CD4-positive, alpha-beta T cell (primary cell): ENCODE measurements at regions of chr1 and their contacts with region 1.

Region 1: GRCh38 chr1:167676205-167676915 is 45.4 kb upstream of the MPZL1 start:
- DNase-seq: peak in 1 of 14 experiments; percentile 20
- ATAC-seq: no peak
- H3K4me3 ChIP-seq: no peak overlapping the region
- H3K4me3 Mint-ChIP-seq: no peak overlapping the region
- H3K27ac ChIP-seq: peak overlapping the region in 1 of 2 donors; percentile 5
- H3K27ac Mint-ChIP-seq: no peak overlapping the region
- H3K4me1 ChIP-seq: peaks cover 56% of the 10 kb centered on the region
- H3K4me1 Mint-ChIP-seq: peaks cover 34% of the 10 kb centered on the region
- H3K27me3 ChIP-seq: no peaks in the 10 kb centered on the region
- H3K27me3 Mint-ChIP-seq: no peaks in the 10 kb centered on the region
- CTCF ChIP-seq: no peak

Region 2: GRCh38 chr1:167043752-167044488 is 632.4 kb before region 1 on chr1:
- CTCF ChIA-PET with region 1: no interaction called
- POLR2A ChIA-PET with region 1: no interaction called
- intact Hi-C with region 1: no loop called
- DNase-seq: peak; percentile 38 to 87 (median 63)
- ATAC-seq: peak; percentile 99
- H3K4me3 ChIP-seq: peak overlapping the region; percentile 56
- H3K4me3 Mint-ChIP-seq: peak overlapping the region; percentile 90
- H3K27ac ChIP-seq: no peak overlapping the region
- H3K27ac Mint-ChIP-seq: peak overlapping the region; percentile 69
- H3K4me1 ChIP-seq: peaks cover 12% of the 10 kb centered on the region
- H3K4me1 Mint-ChIP-seq: peaks cover 14% of the 10 kb centered on the region
- H3K27me3 ChIP-seq: peaks cover 0 to 5% of the 10 kb centered on the region in 2 experiments
- H3K27me3 Mint-ChIP-seq: peaks cover 9% of the 10 kb centered on the region
- CTCF ChIP-seq: no peak

Region 3: GRCh38 chr1:167474191-167474716 is 202.1 kb before region 1 on chr1:
- CTCF ChIA-PET with region 1: no interaction called
- POLR2A ChIA-PET with region 1: no interaction called
- intact Hi-C with region 1: no loop called
- DNase-seq: peak in 8 of 14 experiments; percentile 40 to 80 (median 58)
- ATAC-seq: peak; percentile 84
- H3K4me3 ChIP-seq: peak overlapping the region; percentile 36
- H3K4me3 Mint-ChIP-seq: peak overlapping the region; percentile 78
- H3K27ac ChIP-seq: peak overlapping the region; percentile 67
- H3K27ac Mint-ChIP-seq: peak overlapping the region; percentile 100
- H3K4me1 ChIP-seq: peaks cover 74% of the 10 kb centered on the region
- H3K4me1 Mint-ChIP-seq: peaks cover 100% of the 10 kb centered on the region
- H3K27me3 ChIP-seq: no peaks in the 10 kb centered on the region
- H3K27me3 Mint-ChIP-seq: no peaks in the 10 kb centered on the region
- CTCF ChIP-seq: no peak

Region 4: GRCh38 chr1:167641786-167642500 is 34.4 kb before region 1 on chr1:
- CTCF ChIA-PET with region 1: interaction called, 5 read pairs
- POLR2A ChIA-PET with region 1: interaction called, 5 read pairs
- intact Hi-C with region 1: loop called in 1 of 2 experiments (anchors 5 kb)
- DNase-seq: peak in 4 of 14 experiments; percentile 33 to 66 (median 54)
- ATAC-seq: peak; percentile 27
- H3K4me3 ChIP-seq: no peak overlapping the region
- H3K4me3 Mint-ChIP-seq: peak overlapping the region; percentile 1
- H3K27ac ChIP-seq: peak overlapping the region in 1 of 2 donors; percentile 50
- H3K27ac Mint-ChIP-seq: peak overlapping the region; percentile 77
- H3K4me1 ChIP-seq: peaks cover 98% of the 10 kb centered on the region
- H3K4me1 Mint-ChIP-seq: peaks cover 90% of the 10 kb centered on the region
- H3K27me3 ChIP-seq: no peaks in the 10 kb centered on the region
- H3K27me3 Mint-ChIP-seq: no peaks in the 10 kb centered on the region
- CTCF ChIP-seq: no peak

Region 5: DNA sequence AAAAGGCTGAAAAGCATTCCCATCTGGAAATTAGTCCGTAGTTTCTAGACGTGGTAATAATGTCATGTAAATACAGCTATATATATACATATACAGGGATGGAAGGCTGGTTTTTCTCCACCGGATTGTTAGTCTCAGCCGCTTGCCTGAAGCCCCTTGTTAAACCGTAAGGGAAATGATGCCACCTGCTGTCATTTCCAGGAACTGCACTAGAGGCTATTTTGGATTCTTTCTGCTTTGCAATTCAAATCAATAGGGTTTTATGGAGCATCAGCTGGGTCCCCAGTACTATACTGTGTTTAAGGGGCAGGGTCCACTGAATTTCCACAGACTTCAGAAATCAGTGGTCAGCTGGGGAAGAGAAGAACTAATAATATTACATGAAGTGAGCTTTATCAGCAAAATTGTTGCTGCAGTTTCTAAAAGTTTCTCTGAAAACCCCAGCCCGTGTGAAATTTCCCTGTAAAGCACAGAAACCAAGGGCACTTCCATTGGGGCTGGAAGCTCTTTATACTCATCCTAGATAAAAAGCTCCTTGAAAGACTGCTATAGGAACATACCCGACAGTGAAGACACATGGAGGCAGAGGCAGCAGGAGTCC is 11.7 kb after region 1 on chr1:
- CTCF ChIA-PET with region 1: interaction called, 13 read pairs
- POLR2A ChIA-PET with region 1: interaction called, 4 read pairs
- intact Hi-C with region 1: no loop called
- DNase-seq: peak; percentile 40 to 89 (median 74)
- ATAC-seq: peak; percentile 85
- H3K4me3 ChIP-seq: no peak overlapping the region
- H3K4me3 Mint-ChIP-seq: no peak overlapping the region
- H3K27ac ChIP-seq: no peak overlapping the region
- H3K27ac Mint-ChIP-seq: peak overlapping the region; percentile 21
- H3K4me1 ChIP-seq: peaks cover 16% of the 10 kb centered on the region
- H3K4me1 Mint-ChIP-seq: peaks cover 11% of the 10 kb centered on the region
- H3K27me3 ChIP-seq: no peaks in the 10 kb centered on the region
- H3K27me3 Mint-ChIP-seq: no peaks in the 10 kb centered on the region
- CTCF ChIP-seq: peak; percentile 92